CD8-positive, alpha-beta T cell (primary cell): ENCODE measurements at regions of chr7 and their contacts with region 1.

Region 1: GRCh38 chr7:108497082-108497725 is 28.7 kb downstream of the PNPLA8 start:
- DNase-seq: peak; percentile 18 to 74 (median 52)
- ATAC-seq: peak; percentile 93
- H3K4me3 ChIP-seq: no peak overlapping the region
- H3K4me3 Mint-ChIP-seq: no peak overlapping the region
- H3K27ac ChIP-seq: no peak overlapping the region
- H3K27ac Mint-ChIP-seq: no peak overlapping the region
- H3K4me1 ChIP-seq: no peaks in the 10 kb centered on the region
- H3K4me1 Mint-ChIP-seq: peaks cover 6% of the 10 kb centered on the region
- H3K27me3 ChIP-seq: no peaks in the 10 kb centered on the region
- H3K27me3 Mint-ChIP-seq: no peaks in the 10 kb centered on the region
- CTCF ChIP-seq: peak; percentile 95

Region 2: DNA sequence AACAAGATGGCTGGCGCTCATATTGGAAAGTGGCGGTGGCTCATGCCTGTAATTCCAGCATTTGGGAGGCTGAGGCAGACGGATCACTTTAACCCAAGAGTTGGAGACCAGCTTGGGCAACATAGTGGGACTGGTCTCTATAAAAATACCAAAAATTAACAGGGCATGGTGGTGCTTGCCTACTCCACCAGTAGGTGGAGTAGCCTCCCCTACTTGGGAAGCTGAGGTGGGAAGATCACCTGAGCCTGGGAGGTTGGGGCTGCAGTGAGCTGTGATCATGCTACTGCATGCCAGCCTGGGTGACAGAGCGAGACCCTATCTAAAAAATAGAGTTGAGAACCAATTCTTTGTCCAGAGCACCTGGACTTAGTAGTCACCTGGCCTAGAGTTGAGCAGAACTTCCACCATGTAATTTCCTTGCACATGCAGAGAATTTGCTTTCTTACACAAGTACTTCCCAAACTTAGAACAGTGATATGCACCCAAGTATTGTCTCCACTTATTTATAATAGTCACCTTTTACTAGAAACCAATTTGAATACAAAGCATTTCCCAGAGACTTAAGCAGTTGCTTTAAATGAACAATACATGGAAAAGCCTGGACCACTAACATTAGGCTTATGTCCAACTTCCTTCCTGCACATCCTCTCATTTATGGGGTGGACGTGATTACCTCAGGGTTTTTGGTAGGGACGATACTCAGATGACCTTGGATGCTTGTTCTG is 382.9 kb before region 1 on chr7:
- CTCF ChIA-PET with region 1: no interaction called
- POLR2A ChIA-PET with region 1: no interaction called
- intact Hi-C with region 1: loop called in 1 of 2 experiments (anchors 5 kb)
- DNase-seq: peak in 2 of 9 experiments; percentile 17 to 38
- ATAC-seq: no peak
- H3K4me3 ChIP-seq: no peak overlapping the region
- H3K4me3 Mint-ChIP-seq: no peak overlapping the region
- H3K27ac ChIP-seq: no peak overlapping the region
- H3K27ac Mint-ChIP-seq: no peak overlapping the region
- H3K4me1 ChIP-seq: no peaks in the 10 kb centered on the region
- H3K4me1 Mint-ChIP-seq: no peaks in the 10 kb centered on the region
- H3K27me3 ChIP-seq: no peaks in the 10 kb centered on the region
- H3K27me3 Mint-ChIP-seq: no peaks in the 10 kb centered on the region
- CTCF ChIP-seq: peak; percentile 19

Region 3: DNA sequence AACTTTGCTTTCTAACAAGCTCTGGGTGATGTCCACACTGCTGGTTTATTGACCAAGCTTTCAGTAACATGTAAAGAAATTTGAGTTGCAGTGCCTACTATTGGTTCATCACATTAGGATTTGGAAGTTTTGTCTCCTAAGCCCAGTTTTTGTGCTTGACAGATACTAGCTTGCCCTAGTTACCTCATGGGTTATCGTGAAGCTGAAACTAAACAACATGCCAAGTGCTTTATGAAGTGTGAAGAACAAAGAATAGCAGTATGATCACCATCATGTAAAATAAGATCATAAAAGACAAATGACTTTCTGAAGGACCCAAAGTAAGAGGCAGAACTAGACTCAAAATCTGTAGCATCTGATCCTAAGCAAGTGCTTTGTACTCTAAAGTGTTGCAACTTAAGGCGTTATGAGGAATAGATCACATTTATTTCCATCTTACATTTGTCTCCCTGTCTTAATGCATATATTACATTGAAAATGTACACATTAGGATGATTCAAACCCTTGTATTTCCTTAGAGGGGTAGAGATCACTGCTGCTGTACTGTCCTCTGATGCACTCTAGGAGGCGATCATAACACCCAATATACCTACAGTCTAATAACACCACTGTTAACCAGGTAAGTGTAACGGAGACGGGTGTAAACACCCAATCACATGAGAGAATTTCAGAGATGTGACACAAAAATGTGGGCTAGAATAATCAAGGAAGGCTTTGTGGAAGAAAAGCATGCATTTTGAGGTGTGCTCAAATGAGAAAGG is 112.3 kb before region 1 on chr7:
- CTCF ChIA-PET with region 1: no interaction called
- POLR2A ChIA-PET with region 1: no interaction called
- intact Hi-C with region 1: loop called in 1 of 2 experiments (anchors 5 kb)
- DNase-seq: peak in 1 of 9 experiments; percentile 7
- ATAC-seq: no peak
- H3K4me3 ChIP-seq: no peak overlapping the region
- H3K4me3 Mint-ChIP-seq: no peak overlapping the region
- H3K27ac ChIP-seq: no peak overlapping the region
- H3K27ac Mint-ChIP-seq: no peak overlapping the region
- H3K4me1 ChIP-seq: no peaks in the 10 kb centered on the region
- H3K4me1 Mint-ChIP-seq: peaks cover 2% of the 10 kb centered on the region
- H3K27me3 ChIP-seq: no peaks in the 10 kb centered on the region
- H3K27me3 Mint-ChIP-seq: no peaks in the 10 kb centered on the region
- CTCF ChIP-seq: no peak

Region 4: GRCh38 chr7:108468246-108468645 is 29.0 kb before region 1 on chr7:
- CTCF ChIA-PET with region 1: interaction called, 10 read pairs
- POLR2A ChIA-PET with region 1: no interaction called
- intact Hi-C with region 1: no loop called
- DNase-seq: no peak
- ATAC-seq: no peak
- H3K4me3 ChIP-seq: no peak overlapping the region
- H3K4me3 Mint-ChIP-seq: no peak overlapping the region
- H3K27ac ChIP-seq: no peak overlapping the region
- H3K27ac Mint-ChIP-seq: no peak overlapping the region
- H3K4me1 ChIP-seq: peaks cover 25% of the 10 kb centered on the region
- H3K4me1 Mint-ChIP-seq: peaks cover 45% of the 10 kb centered on the region
- H3K27me3 ChIP-seq: no peaks in the 10 kb centered on the region
- H3K27me3 Mint-ChIP-seq: no peaks in the 10 kb centered on the region
- CTCF ChIP-seq: no peak

Region 5: DNA sequence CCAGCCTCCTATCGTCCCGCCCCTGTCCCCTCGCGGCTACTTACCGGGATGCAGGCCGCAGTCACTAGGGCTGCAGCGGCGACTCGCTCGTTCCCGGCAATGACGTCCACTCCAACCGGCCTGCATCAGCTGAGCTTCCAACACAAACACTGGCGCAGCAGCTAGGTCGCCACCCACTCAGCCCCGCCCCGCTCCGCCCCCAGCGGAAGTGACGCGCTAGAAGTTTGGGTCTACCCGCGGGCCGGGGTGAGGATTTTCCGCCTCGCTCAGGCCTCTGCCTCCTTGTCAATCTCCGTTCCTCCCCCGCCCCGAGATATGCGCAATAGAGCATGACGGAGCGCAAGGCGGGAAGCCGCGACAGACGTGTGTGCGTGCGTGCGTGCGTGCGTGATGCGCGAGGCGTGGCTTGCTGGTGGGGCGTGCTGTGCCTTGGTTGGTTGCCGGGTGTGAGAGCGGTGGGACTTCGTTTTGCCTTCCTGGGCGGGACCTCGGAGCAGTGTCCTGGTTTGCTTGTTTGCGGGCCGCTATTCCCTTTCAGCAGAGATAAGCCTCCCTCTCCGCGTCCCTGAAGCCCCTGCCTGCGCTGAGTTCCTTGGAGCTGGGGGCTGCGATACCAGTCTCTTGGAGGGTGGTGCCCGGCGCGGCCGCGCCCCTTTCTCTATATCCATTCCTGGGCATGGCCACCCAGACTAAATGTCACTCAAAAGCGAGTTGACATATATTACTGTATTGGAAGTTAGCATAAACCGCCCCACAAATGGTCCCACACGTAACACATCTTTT is 29.0 kb after region 1 on chr7 and contains the start of gene PNPLA8:
- CTCF ChIA-PET with region 1: interaction called, 11 read pairs
- POLR2A ChIA-PET with region 1: interaction called, 3 read pairs
- intact Hi-C with region 1: no loop called
- DNase-seq: peak; percentile 100
- ATAC-seq: peak; percentile 90
- H3K4me3 ChIP-seq: peak within 1 kb of the TSS; percentile 80 to 93
- H3K4me3 Mint-ChIP-seq: peak within 1 kb of the TSS; percentile 97
- H3K27ac ChIP-seq: peak within 1 kb of the TSS; percentile 94 to 96
- H3K27ac Mint-ChIP-seq: peak within 1 kb of the TSS; percentile 99
- H3K4me1 ChIP-seq: peaks cover 21% of the 10 kb centered on the region
- H3K4me1 Mint-ChIP-seq: peaks cover 48% of the 10 kb centered on the region
- H3K27me3 ChIP-seq: no peaks in the 10 kb centered on the region
- H3K27me3 Mint-ChIP-seq: no peaks in the 10 kb centered on the region
- CTCF ChIP-seq: no peak
- total RNA-seq, gene PNPLA8: 98.6 to 101 TPM